ENCODE measurements at regions of chr5 and their contacts with region 1.

Region 1: DNA sequence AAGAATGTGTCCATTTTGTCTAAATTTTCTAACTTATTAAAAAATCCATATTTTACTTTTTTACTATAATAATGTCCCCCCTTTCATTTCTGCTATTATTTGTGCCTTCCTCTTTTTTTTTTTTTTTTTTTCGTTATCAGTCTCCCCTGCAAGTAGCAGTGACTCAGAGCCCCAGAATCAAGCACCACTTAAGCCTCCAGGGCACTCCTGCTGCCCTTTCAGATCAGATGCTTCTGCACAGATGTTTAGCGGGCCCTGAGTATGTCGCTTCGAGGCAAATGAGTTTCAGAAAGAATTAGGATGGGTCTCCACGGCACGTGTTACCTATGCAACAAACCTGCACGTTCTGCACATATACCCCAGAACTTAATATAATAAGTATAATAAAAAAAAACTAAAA is 11.7 kb downstream of the MED7 start:
- DNase-seq: peak; percentile 53
- H3K4me3 Mint-ChIP-seq: no peak overlapping the region
- H3K27ac Mint-ChIP-seq: no peak overlapping the region
- H3K4me1 Mint-ChIP-seq: peaks cover 35% of the 10 kb centered on the region
- H3K27me3 Mint-ChIP-seq: no peaks in the 10 kb centered on the region

Region 2: GRCh38 chr5:155136216-155136850 is 1994.6 kb before region 1 on chr5:
- intact Hi-C with region 1: loop called (anchors 5 kb)
- DNase-seq: no peak
- H3K4me3 Mint-ChIP-seq: no peak overlapping the region
- H3K27ac Mint-ChIP-seq: no peak overlapping the region
- H3K4me1 Mint-ChIP-seq: no peaks in the 10 kb centered on the region
- H3K27me3 Mint-ChIP-seq: peaks cover 16% of the 10 kb centered on the region

Region 3: DNA sequence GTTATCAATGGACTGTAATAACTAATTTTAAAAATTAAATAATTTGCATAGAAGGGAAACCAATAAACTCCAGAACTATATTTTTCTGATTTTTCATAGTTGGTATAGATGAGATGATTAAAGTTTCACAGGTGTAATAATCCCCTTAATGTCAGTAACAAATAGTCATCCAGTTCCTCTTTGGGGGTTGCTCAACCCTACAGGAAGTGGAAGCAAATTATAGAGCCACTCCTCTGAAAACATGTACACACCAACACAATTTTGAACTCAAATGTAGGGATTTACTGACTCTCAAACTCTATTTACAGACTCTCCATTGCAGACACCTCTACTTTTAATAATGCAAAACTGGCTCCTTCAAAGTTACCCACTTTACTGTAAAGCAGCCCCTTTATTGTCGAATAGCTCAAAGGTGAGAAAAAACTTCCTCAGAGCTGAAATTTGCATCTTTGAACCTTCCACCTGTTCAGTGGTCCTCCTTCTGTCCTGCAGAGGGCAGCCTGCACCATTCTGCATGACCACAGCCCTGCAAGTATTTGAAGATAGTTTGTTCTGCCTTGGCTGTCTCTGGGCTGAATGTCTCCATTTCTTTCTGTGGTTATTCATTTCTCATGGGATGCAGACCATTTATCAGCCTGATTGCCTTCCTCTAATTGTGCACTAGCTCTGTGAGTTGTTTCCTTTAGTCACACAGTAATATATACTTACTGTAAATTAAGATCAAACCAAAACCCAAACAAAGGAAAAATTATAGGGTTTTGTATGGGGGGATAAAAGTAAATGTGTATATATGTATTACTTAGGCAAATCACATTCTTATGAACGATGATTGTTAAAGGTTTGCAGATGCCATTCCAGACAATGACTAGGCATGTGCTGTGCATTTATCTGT is 1187.2 kb before region 1 on chr5:
- intact Hi-C with region 1: loop called (anchors 1 kb)
- DNase-seq: peak; percentile 77
- H3K4me3 Mint-ChIP-seq: no peak overlapping the region
- H3K27ac Mint-ChIP-seq: no peak overlapping the region
- H3K4me1 Mint-ChIP-seq: peaks cover 4% of the 10 kb centered on the region
- H3K27me3 Mint-ChIP-seq: peaks cover 11% of the 10 kb centered on the region

Region 4: GRCh38 chr5:156835905-156836304 is 295.0 kb before region 1 on chr5:
- intact Hi-C with region 1: loop called (anchors 10 kb)
- DNase-seq: peak; percentile 57
- H3K4me3 Mint-ChIP-seq: no peak overlapping the region
- H3K27ac Mint-ChIP-seq: no peak overlapping the region
- H3K4me1 Mint-ChIP-seq: peaks cover 20% of the 10 kb centered on the region
- H3K27me3 Mint-ChIP-seq: no peaks in the 10 kb centered on the region

Region 5: GRCh38 chr5:157108976-157109375 is 21.9 kb before region 1 on chr5 and contains the start of gene HAVCR2:
- intact Hi-C with region 1: loop called (anchors 1 kb)
- DNase-seq: peak; percentile 90
- H3K4me3 Mint-ChIP-seq: peak within 1 kb of the TSS; percentile 97
- H3K27ac Mint-ChIP-seq: peak within 1 kb of the TSS; percentile 98
- H3K4me1 Mint-ChIP-seq: peaks cover 58% of the 10 kb centered on the region
- H3K27me3 Mint-ChIP-seq: no peaks in the 10 kb centered on the region
- total RNA-seq, gene HAVCR2: 70.0 and 73.1 TPM in 2 replicates

Measured in activated CD4-positive, alpha-beta T cell treated with anti-CD3 and anti-CD28 coated beads, Interleukin-2, amount 10 ng/mL, durations not matched to agents 24 days and 14 days (primary cell).